AG04450 (cell line): ENCODE measurements at regions of chr11 and their contacts with region 1.

Region 1: GRCh38 chr11:124402326-124402922 is 3.6 kb upstream of the OR8B3 start:
- DNase-seq: peak; percentile 74
- H3K4me3 ChIP-seq: no peak overlapping the region
- H3K27ac ChIP-seq: no peak overlapping the region
- H3K27me3 ChIP-seq: no peaks in the 10 kb centered on the region
- CTCF ChIP-seq: peak; percentile 88

Region 2: DNA sequence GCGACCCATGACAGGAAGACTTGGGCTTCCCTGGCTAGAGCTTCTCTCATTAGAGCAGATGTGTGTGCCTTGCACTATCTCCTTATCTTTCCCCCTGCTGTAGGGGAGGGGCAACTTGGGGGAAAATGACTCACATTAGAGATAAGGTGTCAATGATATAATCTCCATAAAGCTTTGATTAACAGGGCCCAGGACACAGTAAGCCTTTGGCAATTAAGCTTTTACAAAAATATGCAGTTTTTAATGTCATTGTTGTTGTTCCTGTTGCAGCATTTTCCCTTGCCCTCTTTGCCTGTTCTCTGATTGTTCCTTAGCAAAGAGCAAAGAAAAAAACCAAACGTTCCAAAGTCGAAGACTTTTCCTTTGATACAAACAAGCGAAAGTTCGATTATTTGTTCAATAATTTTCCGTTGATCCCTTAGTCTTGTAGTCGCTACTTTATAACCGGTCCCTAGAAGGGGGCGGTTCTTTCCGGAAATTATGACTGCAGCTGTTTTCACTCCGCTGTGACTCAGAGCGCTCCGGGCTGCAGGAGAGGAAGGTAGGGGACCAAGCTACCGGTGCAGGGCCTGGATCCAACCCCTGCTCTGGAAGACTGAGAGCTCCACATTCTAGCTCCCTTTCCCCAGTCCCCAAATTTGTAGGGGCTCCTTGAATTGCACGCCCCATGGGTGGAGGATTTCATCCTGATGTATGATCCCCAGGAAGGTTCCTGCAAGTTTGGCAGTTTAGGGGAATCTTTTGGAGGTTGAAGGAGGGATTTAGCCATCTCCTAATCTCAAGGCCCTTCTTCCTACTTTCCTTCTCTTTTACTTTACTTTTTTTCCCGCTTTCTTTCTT is 287.3 kb before region 1 on chr11 and contains the start of gene VWA5A:
- CTCF ChIA-PET with region 1: interaction called, 15 read pairs
- POLR2A ChIA-PET with region 1: no interaction called
- DNase-seq: peak; percentile 58
- H3K4me3 ChIP-seq: peak within 1 kb of the TSS; percentile 74
- H3K27ac ChIP-seq: no peak within 1 kb of the TSS
- H3K27me3 ChIP-seq: no peaks in the 10 kb centered on the region
- CTCF ChIP-seq: no peak
- polyA plus RNA-seq, gene VWA5A: 26.9 and 27.9 TPM in 2 replicates

Region 3: GRCh38 chr11:124481365-124482323 is 79.2 kb after region 1 on chr11:
- CTCF ChIA-PET with region 1: interaction called, 16 read pairs
- POLR2A ChIA-PET with region 1: no interaction called
- DNase-seq: peak; percentile 10
- H3K4me3 ChIP-seq: peak overlapping the region; percentile 39
- H3K27ac ChIP-seq: no peak overlapping the region
- H3K27me3 ChIP-seq: no peaks in the 10 kb centered on the region
- CTCF ChIP-seq: no peak

Region 4: GRCh38 chr11:124586238-124586860 is 183.9 kb after region 1 on chr11:
- CTCF ChIA-PET with region 1: interaction called, 40 read pairs
- POLR2A ChIA-PET with region 1: no interaction called
- DNase-seq: peak; percentile 23
- H3K4me3 ChIP-seq: no peak overlapping the region
- H3K27ac ChIP-seq: no peak overlapping the region
- H3K27me3 ChIP-seq: peaks cover 10% of the 10 kb centered on the region
- CTCF ChIP-seq: peak; percentile 74

Region 5: DNA sequence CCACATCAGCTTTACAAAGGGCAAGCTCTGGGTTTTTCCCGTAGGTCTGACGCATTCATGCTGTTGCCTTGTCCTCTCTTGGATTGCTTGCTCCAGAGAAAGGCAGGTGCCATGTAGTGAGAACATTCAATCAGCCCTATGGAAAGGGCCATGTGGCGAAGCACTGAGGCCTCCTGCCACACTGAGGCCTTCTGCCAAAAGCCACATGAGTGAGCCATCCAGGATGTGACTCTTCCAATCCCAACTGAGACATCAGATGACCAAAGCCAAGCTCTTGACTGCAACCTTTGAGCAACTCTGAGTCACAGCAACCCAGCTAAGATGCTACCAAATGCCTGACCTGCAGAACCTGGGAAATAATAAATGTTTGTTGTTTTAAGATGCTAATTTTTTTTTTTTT is 199.8 kb after region 1 on chr11:
- CTCF ChIA-PET with region 1: interaction called, 12 read pairs
- POLR2A ChIA-PET with region 1: no interaction called
- DNase-seq: no peak
- H3K4me3 ChIP-seq: no peak overlapping the region
- H3K27ac ChIP-seq: no peak overlapping the region
- H3K27me3 ChIP-seq: no peaks in the 10 kb centered on the region
- CTCF ChIP-seq: no peak